MCF 10A (cell line): ENCODE measurements at regions of chr9 and their contacts with region 1.

Region 1: DNA sequence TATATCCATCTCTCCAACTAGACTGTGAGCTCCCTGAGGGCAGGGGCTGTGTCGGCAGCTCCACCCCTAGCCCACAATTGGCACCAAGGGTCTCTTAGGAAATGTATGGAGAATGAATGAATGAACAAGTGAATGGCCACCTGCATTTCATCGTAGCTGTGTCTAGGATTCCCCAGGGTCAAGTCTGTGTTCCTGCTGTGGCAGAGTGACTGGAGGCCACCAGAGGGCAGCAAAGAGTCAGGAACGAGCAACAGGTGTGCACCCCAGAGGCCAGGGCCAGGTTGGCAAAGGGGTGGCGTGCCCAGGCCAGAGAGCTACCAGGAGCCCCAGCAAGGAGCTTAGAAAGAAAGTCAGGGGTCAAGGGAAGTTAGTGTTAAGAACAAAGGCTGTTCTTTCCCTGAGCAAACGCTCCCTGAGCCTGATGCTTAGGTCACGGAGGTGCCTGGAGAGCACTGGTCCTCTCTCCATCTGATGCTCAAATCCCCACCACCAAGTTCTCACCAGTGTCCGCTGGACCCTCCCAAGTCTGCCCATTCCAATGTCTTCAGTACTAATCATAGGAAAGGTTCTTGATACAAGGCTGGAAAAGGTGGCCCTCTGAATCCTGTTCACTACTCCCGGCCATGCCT is 160.7 kb downstream of the PAX5 start:
- DNase-seq: peak; percentile 73
- H3K4me3 Mint-ChIP-seq: no peak overlapping the region
- H3K27ac Mint-ChIP-seq: no peak overlapping the region
- H3K4me1 Mint-ChIP-seq: no peaks in the 10 kb centered on the region
- H3K27me3 Mint-ChIP-seq: peaks cover 63% of the 10 kb centered on the region
- CTCF ChIP-seq: peak; percentile 97

Region 2: GRCh38 chr9:36738318-36738976 is 134.9 kb before region 1 on chr9:
- CTCF ChIA-PET with region 1: no interaction called
- POLR2A ChIA-PET with region 1: no interaction called
- intact Hi-C with region 1: no loop called
- DNase-seq: peak; percentile 61
- H3K4me3 Mint-ChIP-seq: no peak overlapping the region
- H3K27ac Mint-ChIP-seq: peak overlapping the region; percentile 9
- H3K4me1 Mint-ChIP-seq: peaks cover 8% of the 10 kb centered on the region
- H3K27me3 Mint-ChIP-seq: peaks cover 19% of the 10 kb centered on the region
- CTCF ChIP-seq: no peak

Region 3: DNA sequence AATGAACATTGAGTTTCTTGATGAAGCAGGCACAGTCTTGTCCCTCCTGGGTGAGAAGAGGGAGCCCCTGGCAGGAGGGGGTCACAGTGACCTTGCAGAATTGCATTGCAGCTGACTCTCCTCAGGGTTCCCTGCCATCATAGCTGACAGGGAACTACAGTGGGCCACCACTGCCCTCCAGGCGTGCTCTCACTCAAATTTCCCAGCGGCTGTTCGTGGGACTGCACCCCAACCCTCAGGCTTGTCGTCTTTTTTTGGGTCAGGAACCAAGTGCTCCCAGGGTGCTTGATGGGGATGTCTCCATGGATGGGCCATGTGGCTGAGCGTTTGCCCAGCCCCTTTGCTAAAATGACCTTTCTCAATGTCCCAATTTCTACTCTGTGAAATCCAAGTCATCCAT is 84.8 kb before region 1 on chr9:
- CTCF ChIA-PET with region 1: no interaction called
- POLR2A ChIA-PET with region 1: no interaction called
- intact Hi-C with region 1: no loop called
- DNase-seq: peak; percentile 9
- H3K4me3 Mint-ChIP-seq: no peak overlapping the region
- H3K27ac Mint-ChIP-seq: no peak overlapping the region
- H3K4me1 Mint-ChIP-seq: no peaks in the 10 kb centered on the region
- H3K27me3 Mint-ChIP-seq: peaks cover 53% of the 10 kb centered on the region
- CTCF ChIP-seq: peak; percentile 34

Region 4: GRCh38 chr9:36891341-36891959 is 18.1 kb after region 1 on chr9:
- CTCF ChIA-PET with region 1: interaction called, 17 read pairs
- POLR2A ChIA-PET with region 1: no interaction called
- intact Hi-C with region 1: no loop called
- DNase-seq: no peak
- H3K4me3 Mint-ChIP-seq: no peak overlapping the region
- H3K27ac Mint-ChIP-seq: no peak overlapping the region
- H3K4me1 Mint-ChIP-seq: no peaks in the 10 kb centered on the region
- H3K27me3 Mint-ChIP-seq: peaks cover 47% of the 10 kb centered on the region
- CTCF ChIP-seq: no peak

Region 5: DNA sequence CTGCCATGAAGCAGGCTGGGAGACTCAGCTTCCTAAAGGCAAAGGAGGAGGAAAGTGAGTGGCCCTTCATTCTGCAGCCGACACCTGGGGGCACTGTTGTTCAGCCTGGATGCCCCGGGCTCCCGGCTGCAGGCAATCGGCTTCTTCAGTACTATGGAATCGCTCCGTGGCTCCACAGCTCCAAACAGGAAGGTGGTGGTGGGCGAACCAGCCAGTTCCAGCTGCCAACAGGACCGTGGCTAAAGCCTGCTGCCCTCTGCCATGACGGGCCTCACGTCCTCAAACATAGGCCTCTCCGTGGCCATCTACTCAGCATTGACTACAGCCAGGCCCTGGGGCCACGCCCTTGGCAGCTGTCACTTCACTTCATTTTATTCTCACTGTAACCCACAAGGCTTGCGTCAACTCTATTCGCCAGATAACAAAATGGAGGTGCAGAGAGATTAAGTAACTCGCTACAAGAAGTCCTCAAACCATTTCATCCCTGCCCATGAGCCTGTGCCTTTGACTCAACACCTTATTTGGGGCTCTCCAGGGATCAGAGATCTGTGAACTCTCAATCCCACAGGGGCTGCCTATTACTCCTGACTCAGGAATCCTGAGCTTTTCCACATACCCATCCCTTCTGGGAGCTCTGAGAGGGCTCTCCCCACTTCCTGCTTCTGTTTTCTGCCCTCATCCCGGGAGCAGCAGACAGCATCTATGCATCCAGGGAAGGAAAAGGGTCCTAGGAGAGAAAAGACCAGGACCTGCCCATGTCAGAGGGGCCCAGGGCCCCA is 122.8 kb after region 1 on chr9:
- CTCF ChIA-PET with region 1: interaction called, 128 read pairs
- POLR2A ChIA-PET with region 1: no interaction called
- intact Hi-C with region 1: loop called (anchors 1 kb)
- DNase-seq: peak; percentile 71
- H3K4me3 Mint-ChIP-seq: no peak overlapping the region
- H3K27ac Mint-ChIP-seq: no peak overlapping the region
- H3K4me1 Mint-ChIP-seq: peaks cover 20% of the 10 kb centered on the region
- H3K27me3 Mint-ChIP-seq: peaks cover 19% of the 10 kb centered on the region
- CTCF ChIP-seq: peak; percentile 81

Region 6: DNA sequence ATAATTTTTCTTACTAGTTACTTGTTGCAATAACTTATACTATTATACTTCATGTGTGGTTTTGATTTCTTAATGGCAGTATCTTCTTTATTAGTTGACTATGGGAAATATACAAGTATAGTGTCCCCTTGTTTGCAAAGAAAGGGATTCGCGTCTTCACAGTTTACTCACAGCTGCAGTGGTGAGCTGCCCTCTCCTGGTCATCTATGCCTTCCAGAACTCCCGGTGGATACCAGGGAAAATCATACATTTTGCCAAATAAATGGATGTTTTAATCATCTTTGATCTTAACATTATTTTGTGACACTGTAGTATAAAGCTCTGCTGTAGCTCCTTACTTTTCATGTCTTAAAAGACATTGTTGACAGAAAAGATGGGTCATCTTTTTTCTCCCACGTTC is 389.0 kb after region 1 on chr9:
- CTCF ChIA-PET with region 1: interaction called, 4 read pairs
- POLR2A ChIA-PET with region 1: no interaction called
- intact Hi-C with region 1: loop called (anchors 5 kb)
- DNase-seq: peak; percentile 27
- H3K4me3 Mint-ChIP-seq: no peak overlapping the region
- H3K27ac Mint-ChIP-seq: no peak overlapping the region
- H3K4me1 Mint-ChIP-seq: peaks cover 5% of the 10 kb centered on the region
- H3K27me3 Mint-ChIP-seq: no peaks in the 10 kb centered on the region
- CTCF ChIP-seq: peak; percentile 33

Region 7: DNA sequence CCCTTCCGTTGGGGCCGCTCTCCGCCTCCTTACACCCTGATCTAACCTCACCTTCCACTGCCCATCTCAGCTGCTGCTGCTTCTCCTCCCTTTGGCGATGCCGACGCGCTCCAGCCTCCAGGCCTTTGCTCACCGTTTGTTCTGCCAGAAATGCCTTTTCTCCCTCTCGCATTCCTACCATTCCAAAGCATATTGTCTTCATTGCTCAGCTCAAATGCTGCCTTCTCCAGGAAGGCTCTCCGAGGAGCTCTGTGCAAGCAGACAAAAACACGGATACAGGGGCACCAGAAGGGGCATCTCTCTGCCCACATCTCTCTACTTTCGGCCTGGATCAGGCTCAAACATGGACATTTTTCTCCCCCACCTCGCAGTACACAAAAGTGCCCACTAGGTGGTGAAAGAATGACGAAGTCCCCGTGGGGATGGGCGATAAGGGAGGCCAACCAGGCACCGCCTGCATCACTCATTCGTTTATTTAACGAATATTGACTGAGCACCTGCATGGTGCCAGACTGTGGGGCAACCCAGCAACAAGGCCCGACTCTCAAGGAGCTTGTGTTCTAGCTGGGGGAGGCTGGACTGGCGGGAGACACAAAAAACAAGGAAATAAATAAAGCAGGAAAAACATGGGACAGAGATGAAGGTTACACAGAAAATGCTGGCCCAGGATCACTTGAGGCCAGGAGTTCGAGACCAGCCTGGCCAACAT is 541.8 kb after region 1 on chr9:
- CTCF ChIA-PET with region 1: interaction called, 24 read pairs
- POLR2A ChIA-PET with region 1: no interaction called
- intact Hi-C with region 1: loop called (anchors 5 kb)
- DNase-seq: peak; percentile 85
- H3K4me3 Mint-ChIP-seq: peak overlapping the region; percentile 32
- H3K27ac Mint-ChIP-seq: peak overlapping the region; percentile 80
- H3K4me1 Mint-ChIP-seq: peaks cover 48% of the 10 kb centered on the region
- H3K27me3 Mint-ChIP-seq: no peaks in the 10 kb centered on the region
- CTCF ChIP-seq: peak; percentile 72